Endothelial cell of umbilical vein (primary cell): ENCODE measurements at regions of chr4 and their contacts with region 1.

Region 1: DNA sequence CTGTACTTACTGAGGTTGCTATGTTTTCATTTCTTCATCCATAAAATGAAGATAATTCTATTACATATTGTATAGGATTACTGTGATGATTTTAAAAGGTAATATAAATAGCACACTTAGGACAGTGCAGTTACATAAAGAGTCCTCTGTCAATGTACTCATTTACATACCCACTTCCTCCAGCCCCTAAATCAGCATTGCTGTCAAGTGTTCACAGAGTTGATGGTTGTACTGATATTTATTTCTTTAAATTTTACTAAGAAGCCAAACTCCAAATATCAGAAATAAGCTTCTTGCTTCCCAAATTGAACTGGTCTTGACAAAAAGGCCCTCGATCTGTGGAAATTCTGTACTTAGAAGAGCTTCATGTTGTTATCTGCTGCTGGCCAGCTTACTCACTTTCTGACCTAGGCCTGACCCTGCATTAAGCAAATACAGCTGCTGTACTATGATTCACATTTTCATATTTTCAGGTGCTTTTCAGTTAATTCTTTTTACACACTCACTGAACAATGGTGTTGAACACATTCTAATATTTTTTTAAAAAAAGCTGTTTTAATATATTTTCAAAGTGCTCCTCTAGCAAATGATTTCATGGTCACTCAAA is 259.6 kb downstream of the UNC5C start:
- DNase-seq: peak; percentile 92
- H3K4me3 ChIP-seq: no peak overlapping the region
- H3K27ac ChIP-seq: peak overlapping the region; percentile 77
- H3K4me1 ChIP-seq: peaks cover 31% of the 10 kb centered on the region
- H3K27me3 ChIP-seq: no peaks in the 10 kb centered on the region
- CTCF ChIP-seq: no peak
- POLR2A ChIP-seq: no peak

Region 2: DNA sequence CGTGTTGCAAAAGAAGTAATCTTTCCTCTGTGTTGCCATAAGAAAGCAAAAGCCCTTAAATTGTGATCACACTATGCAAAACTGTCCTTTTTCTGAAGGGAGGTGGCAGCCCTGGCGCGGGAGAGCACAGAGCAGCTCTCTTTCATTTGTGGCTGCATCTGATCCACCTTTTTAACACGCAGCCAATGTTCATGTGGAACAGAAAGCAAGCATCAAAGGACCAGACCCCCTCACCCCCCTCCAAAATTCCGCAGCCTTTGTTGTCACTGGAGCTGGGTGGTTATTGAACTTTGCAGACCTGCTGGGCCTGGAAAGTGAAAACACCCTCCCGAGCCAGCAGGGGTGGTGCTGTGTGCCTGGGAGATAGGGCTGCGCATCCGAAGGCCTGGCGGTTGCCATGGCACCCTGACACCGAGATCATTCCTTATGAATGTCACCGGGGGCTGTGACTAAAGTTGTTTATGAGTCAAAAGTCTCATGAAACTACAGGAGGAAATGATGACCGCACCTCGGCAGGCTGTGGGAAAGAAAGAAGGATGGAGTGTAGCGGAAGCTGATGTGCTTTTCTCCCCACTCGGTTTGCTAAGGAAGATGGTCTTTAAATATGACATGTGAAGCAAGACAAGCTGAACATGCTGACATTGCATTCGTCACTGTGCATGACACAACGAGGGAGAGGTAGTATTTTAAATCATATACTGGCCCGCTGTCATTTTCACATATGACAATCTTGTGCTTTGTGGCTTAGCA is 107.7 kb before region 1 on chr4:
- CTCF ChIA-PET with region 1: no interaction called
- POLR2A ChIA-PET with region 1: no interaction called
- dilution Hi-C with region 1: no loop called
- intact Hi-C with region 1: loop called (anchors 5 kb)
- DNase-seq: peak; percentile 11
- H3K4me3 ChIP-seq: no peak overlapping the region
- H3K27ac ChIP-seq: no peak overlapping the region
- H3K4me1 ChIP-seq: no peaks in the 10 kb centered on the region
- H3K27me3 ChIP-seq: no peaks in the 10 kb centered on the region
- CTCF ChIP-seq: no peak
- POLR2A ChIP-seq: no peak

Region 3: GRCh38 chr4:95267081-95267480 is 22.1 kb before region 1 on chr4:
- CTCF ChIA-PET with region 1: interaction called, 8 read pairs
- POLR2A ChIA-PET with region 1: interaction called, 3 read pairs
- dilution Hi-C with region 1: no loop called
- intact Hi-C with region 1: loop called (anchors 1 kb)
- DNase-seq: peak; percentile 68
- H3K4me3 ChIP-seq: no peak overlapping the region
- H3K27ac ChIP-seq: peak overlapping the region; percentile 78
- H3K4me1 ChIP-seq: peaks cover 25% of the 10 kb centered on the region
- H3K27me3 ChIP-seq: no peaks in the 10 kb centered on the region
- CTCF ChIP-seq: no peak
- POLR2A ChIP-seq: no peak

Region 4: GRCh38 chr4:95362906-95363558 is 73.9 kb after region 1 on chr4:
- CTCF ChIA-PET with region 1: interaction called, 3 read pairs
- POLR2A ChIA-PET with region 1: no interaction called
- dilution Hi-C with region 1: no loop called
- intact Hi-C with region 1: loop called (anchors 5 kb)
- DNase-seq: peak; percentile 54
- H3K4me3 ChIP-seq: no peak overlapping the region
- H3K27ac ChIP-seq: peak overlapping the region; percentile 1
- H3K4me1 ChIP-seq: peaks cover 10% of the 10 kb centered on the region
- H3K27me3 ChIP-seq: no peaks in the 10 kb centered on the region
- CTCF ChIP-seq: peak in 1 of 2 donors; percentile 20
- POLR2A ChIP-seq: no peak

Region 5: DNA sequence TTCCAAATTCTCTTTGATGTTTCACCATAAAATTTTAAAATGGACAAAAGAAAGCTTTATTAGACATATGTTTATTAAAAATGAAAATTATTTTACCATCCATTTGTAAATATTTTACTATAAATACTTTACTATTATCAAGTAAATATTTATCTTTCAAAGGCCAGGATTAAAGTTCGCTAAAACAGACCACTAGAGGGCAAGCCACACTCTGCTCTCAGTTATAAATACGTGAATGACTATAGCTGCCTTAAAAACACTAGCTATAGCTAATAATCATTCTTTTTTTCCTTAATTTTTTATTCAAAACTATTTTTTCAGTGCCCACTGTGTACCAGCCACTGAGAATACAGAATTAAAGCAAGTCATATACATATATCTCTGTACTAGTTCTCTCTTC is 221.0 kb after region 1 on chr4:
- CTCF ChIA-PET with region 1: interaction called, 3 read pairs
- POLR2A ChIA-PET with region 1: no interaction called
- dilution Hi-C with region 1: no loop called
- intact Hi-C with region 1: loop called (anchors 1 kb)
- DNase-seq: peak; percentile 52
- H3K4me3 ChIP-seq: no peak overlapping the region
- H3K27ac ChIP-seq: no peak overlapping the region
- H3K4me1 ChIP-seq: peaks cover 37% of the 10 kb centered on the region
- H3K27me3 ChIP-seq: no peaks in the 10 kb centered on the region
- CTCF ChIP-seq: peak; percentile 45 to 52
- POLR2A ChIP-seq: no peak